ENCODE measurements at regions of chr2 and their contacts with region 1.

Region 1: DNA sequence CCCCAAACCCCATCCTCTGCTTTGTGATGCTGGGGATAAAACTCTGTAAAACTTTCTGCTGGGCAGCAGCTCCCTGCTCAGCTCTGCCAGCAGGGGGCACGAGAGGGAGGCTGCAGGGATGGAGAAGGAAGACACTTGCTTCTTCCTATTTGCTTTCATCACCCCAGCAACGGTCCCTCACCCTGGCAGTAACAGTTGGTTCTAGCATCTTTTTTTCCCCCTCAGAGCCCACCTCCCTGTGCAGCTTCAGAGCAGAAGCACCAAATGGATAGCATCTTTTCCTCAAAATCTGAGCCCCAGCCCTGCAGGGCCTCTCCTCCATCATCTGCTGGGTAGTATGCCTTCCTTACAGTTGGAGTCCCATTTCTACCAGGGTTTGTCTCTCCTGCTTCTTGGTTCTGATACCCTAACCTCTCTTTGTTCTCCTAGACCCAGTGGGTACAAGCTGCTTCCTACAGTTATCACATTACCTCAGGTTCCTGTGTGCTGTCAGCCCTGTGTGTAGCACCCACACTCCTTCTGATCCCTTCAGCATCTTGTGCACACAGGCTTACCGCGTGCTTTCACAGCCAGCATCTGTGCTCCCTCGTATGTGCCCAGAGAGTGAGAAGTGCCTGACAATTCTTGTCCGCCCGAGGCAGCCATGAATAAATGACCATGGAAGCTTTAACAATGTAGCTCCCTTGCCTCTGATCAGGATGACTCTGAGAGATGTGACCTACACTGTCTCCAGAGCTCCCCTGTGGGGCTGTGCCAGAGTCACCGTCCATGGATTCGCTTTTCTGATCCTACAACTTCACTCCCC is 14.5 kb downstream of the CKAP2L start:
- DNase-seq: peak; percentile 61 to 84 (median 72)
- H3K4me3 ChIP-seq: no peak overlapping the region
- H3K27ac ChIP-seq: no peak overlapping the region
- H3K4me1 ChIP-seq: no peaks in the 10 kb centered on the region
- H3K27me3 ChIP-seq: no peaks in the 10 kb centered on the region
- CTCF ChIP-seq: peak; percentile 70 to 92 (median 84)
- POLR2A ChIP-seq: no peak

Region 2: DNA sequence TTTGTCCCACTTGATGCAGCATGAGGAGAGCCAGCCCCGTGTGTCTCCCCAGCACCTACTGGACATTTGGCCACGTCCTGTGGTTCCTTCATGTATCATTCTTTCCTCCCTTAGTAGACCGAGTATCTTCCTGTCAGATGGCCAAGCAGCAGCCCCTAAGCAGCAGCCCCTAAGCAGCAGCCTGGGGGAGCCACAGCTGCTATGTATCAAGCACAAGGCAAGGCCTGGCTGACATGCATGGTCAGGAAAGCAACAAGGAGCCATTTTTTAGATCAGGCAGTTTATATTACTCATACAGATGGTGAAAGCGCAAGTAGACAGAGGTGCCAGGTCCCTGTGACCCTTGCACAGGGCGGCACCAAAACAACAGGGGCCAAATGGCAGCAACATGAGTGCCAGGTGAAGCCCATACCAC is 143.5 kb before region 1 on chr2:
- intact Hi-C with region 1: no loop called
- DNase-seq: no peak
- H3K4me3 ChIP-seq: no peak overlapping the region
- H3K27ac ChIP-seq: no peak overlapping the region
- H3K4me1 ChIP-seq: no peaks in the 10 kb centered on the region
- H3K27me3 ChIP-seq: no peaks in the 10 kb centered on the region
- CTCF ChIP-seq: no peak
- POLR2A ChIP-seq: no peak

Region 3: GRCh38 chr2:112884869-112885505 is 135.0 kb after region 1 on chr2:
- intact Hi-C with region 1: loop called in 1 of 2 experiments (anchors 5 kb)
- DNase-seq: peak; percentile 24 to 55 (median 40)
- H3K4me3 ChIP-seq: no peak overlapping the region
- H3K27ac ChIP-seq: no peak overlapping the region
- H3K4me1 ChIP-seq: peaks cover 0 to 6% of the 10 kb centered on the region in 2 donors
- H3K27me3 ChIP-seq: no peaks in the 10 kb centered on the region
- CTCF ChIP-seq: peak; percentile 34 to 65 (median 57)
- POLR2A ChIP-seq: no peak

Region 4: GRCh38 chr2:112941753-112942658 is 192.0 kb after region 1 on chr2:
- intact Hi-C with region 1: loop called (anchors 5 to 10 kb)
- DNase-seq: peak; percentile 65 to 79 (median 74)
- H3K4me3 ChIP-seq: no peak overlapping the region
- H3K27ac ChIP-seq: no peak overlapping the region
- H3K4me1 ChIP-seq: no peaks in the 10 kb centered on the region
- H3K27me3 ChIP-seq: peaks cover 3% of the 10 kb centered on the region
- CTCF ChIP-seq: peak; percentile 48 to 66 (median 60)
- POLR2A ChIP-seq: no peak

Region 5: GRCh38 chr2:112958428-112959108 is 208.6 kb after region 1 on chr2:
- intact Hi-C with region 1: loop called in 1 of 2 experiments (anchors 5 kb)
- DNase-seq: peak; percentile 19 to 60 (median 41)
- H3K4me3 ChIP-seq: no peak overlapping the region
- H3K27ac ChIP-seq: no peak overlapping the region
- H3K4me1 ChIP-seq: no peaks in the 10 kb centered on the region
- H3K27me3 ChIP-seq: no peaks in the 10 kb centered on the region
- CTCF ChIP-seq: peak; percentile 52 to 71 (median 62)
- POLR2A ChIP-seq: no peak